Activated naive CD4-positive, alpha-beta T cell treated with anti-CD3 and anti-CD28 coated beads for 36 hours (primary cell): ENCODE measurements at regions of chr2 and their contacts with region 1.

Region 1: GRCh38 chr2:190996338-190996946 is 17.5 kb downstream of the STAT1 start:
- DNase-seq: no peak
- H3K4me3 Mint-ChIP-seq: no peak overlapping the region
- H3K27ac Mint-ChIP-seq: peak overlapping the region; percentile 81
- H3K4me1 Mint-ChIP-seq: peaks cover 65% of the 10 kb centered on the region
- H3K27me3 Mint-ChIP-seq: no peaks in the 10 kb centered on the region

Region 2: GRCh38 chr2:190922376-190922775 is 74.1 kb before region 1 on chr2:
- CTCF ChIA-PET with region 1: no interaction called
- intact Hi-C with region 1: loop called (anchors 2 kb)
- DNase-seq: no peak
- H3K4me3 Mint-ChIP-seq: no peak overlapping the region
- H3K27ac Mint-ChIP-seq: no peak overlapping the region
- H3K4me1 Mint-ChIP-seq: peaks cover 30% of the 10 kb centered on the region
- H3K27me3 Mint-ChIP-seq: no peaks in the 10 kb centered on the region

Region 3: GRCh38 chr2:190965580-190966222 is 30.7 kb before region 1 on chr2:
- CTCF ChIA-PET with region 1: interaction called, 5 read pairs
- intact Hi-C with region 1: loop called (anchors 5 kb)
- DNase-seq: no peak
- H3K4me3 Mint-ChIP-seq: no peak overlapping the region
- H3K27ac Mint-ChIP-seq: peak overlapping the region; percentile 46
- H3K4me1 Mint-ChIP-seq: peaks cover 31% of the 10 kb centered on the region
- H3K27me3 Mint-ChIP-seq: no peaks in the 10 kb centered on the region

Region 4: GRCh38 chr2:190979906-190980629 is 16.4 kb before region 1 on chr2:
- CTCF ChIA-PET with region 1: interaction called, 7 read pairs
- intact Hi-C with region 1: loop called (anchors 2 kb)
- DNase-seq: no peak
- H3K4me3 Mint-ChIP-seq: no peak overlapping the region
- H3K27ac Mint-ChIP-seq: peak overlapping the region; percentile 73
- H3K4me1 Mint-ChIP-seq: peaks cover 58% of the 10 kb centered on the region
- H3K27me3 Mint-ChIP-seq: no peaks in the 10 kb centered on the region

Region 5: DNA sequence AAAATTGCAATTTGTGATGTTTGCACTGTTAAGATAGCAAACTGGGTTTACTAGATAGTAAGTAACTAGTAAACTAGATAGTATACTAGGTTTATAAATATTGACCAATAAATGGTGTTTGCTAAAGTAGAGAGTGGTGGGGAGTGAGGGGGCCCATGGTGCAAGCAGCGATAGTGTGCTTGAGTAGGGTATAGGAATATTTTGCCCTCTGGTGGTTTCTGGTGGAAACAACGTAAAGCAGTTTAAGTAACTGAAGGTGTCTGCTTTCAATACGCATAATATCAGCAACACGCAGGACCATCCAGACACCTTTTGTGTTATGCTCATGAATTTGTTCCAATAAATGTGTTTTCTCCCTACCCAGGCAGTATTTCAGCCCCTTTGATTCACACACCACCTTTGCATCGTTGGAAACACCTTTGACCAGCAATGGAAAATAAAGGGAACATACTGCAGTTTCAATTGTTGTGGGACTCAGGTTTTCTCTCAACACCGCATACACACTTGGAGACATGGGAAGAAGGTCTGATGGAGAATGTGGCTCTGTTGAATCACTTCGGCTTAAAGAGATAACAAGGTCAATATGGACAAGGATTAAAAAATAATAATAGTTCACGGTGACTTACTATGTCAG is 34.2 kb after region 1 on chr2:
- CTCF ChIA-PET with region 1: interaction called, 4 read pairs
- intact Hi-C with region 1: loop called (anchors 5 kb)
- DNase-seq: peak; percentile 59
- H3K4me3 Mint-ChIP-seq: no peak overlapping the region
- H3K27ac Mint-ChIP-seq: peak overlapping the region; percentile 44
- H3K4me1 Mint-ChIP-seq: peaks cover 48% of the 10 kb centered on the region
- H3K27me3 Mint-ChIP-seq: no peaks in the 10 kb centered on the region

Region 6: GRCh38 chr2:191302459-191303139 is 306.2 kb after region 1 on chr2:
- CTCF ChIA-PET with region 1: no interaction called
- intact Hi-C with region 1: no loop called
- DNase-seq: no peak
- H3K4me3 Mint-ChIP-seq: no peak overlapping the region
- H3K27ac Mint-ChIP-seq: no peak overlapping the region
- H3K4me1 Mint-ChIP-seq: no peaks in the 10 kb centered on the region
- H3K27me3 Mint-ChIP-seq: no peaks in the 10 kb centered on the region